Heart left ventricle (tissue), 16 donors: ENCODE measurements at regions of chr3 and their contacts with region 1.

Region 1: GRCh38 chr3:48151058-48151806 is 37.0 kb downstream of the CDC25A start:
- DNase-seq: peak; percentile 80 to 86 (median 82)
- ATAC-seq: peak; percentile 94 to 98 (median 96)
- H3K4me3 ChIP-seq: peak overlapping the region in 2 of 12 donors; percentile 8
- H3K27ac ChIP-seq: peak overlapping the region in 10 of 12 donors; percentile 1 to 74 (median 59)
- H3K4me1 ChIP-seq: peaks cover 0 to 22% (median 17%) of the 10 kb centered on the region in 12 donors
- H3K27me3 ChIP-seq: no peaks in the 10 kb centered on the region
- CTCF ChIP-seq: peak; percentile 53 to 93 (median 84)
- POLR2A ChIP-seq: no peak

Region 2: GRCh38 chr3:47824541-47825473 is 326.4 kb before region 1 on chr3:
- intact Hi-C with region 1: loop called in 3 of 10 experiments (anchors 1 to 5 kb)
- DNase-seq: peak; percentile 75 to 89 (median 80)
- ATAC-seq: peak; percentile 83 to 99 (median 98)
- H3K4me3 ChIP-seq: peak overlapping the region; percentile 49 to 99 (median 84)
- H3K27ac ChIP-seq: peak overlapping the region; percentile 1 to 90 (median 82)
- H3K4me1 ChIP-seq: peaks cover 0 to 25% (median 20%) of the 10 kb centered on the region in 12 donors
- H3K27me3 ChIP-seq: no peaks in the 10 kb centered on the region
- CTCF ChIP-seq: peak; percentile 74 to 94 (median 87)
- POLR2A ChIP-seq: peak in 1 of 2 donors; percentile 37

Region 3: GRCh38 chr3:47836986-47837385 is 314.2 kb before region 1 on chr3:
- intact Hi-C with region 1: loop called (anchors 1 to 5 kb)
- DNase-seq: no peak
- ATAC-seq: no peak
- H3K4me3 ChIP-seq: no peak overlapping the region
- H3K27ac ChIP-seq: no peak overlapping the region
- H3K4me1 ChIP-seq: peaks cover 0 to 8% (median 0%) of the 10 kb centered on the region in 12 donors
- H3K27me3 ChIP-seq: no peaks in the 10 kb centered on the region
- CTCF ChIP-seq: no peak
- POLR2A ChIP-seq: no peak

Region 4: GRCh38 chr3:47877290-47877689 is 273.9 kb before region 1 on chr3:
- intact Hi-C with region 1: loop called in 1 of 10 experiments (anchors 5 kb)
- DNase-seq: no peak
- ATAC-seq: peak in 3 of 4 donors; percentile 30 to 55 (median 49)
- H3K4me3 ChIP-seq: no peak overlapping the region
- H3K27ac ChIP-seq: peak overlapping the region in 9 of 12 donors; percentile 0 to 49 (median 22)
- H3K4me1 ChIP-seq: peaks cover 0 to 53% (median 31%) of the 10 kb centered on the region in 12 donors
- H3K27me3 ChIP-seq: no peaks in the 10 kb centered on the region
- CTCF ChIP-seq: no peak
- POLR2A ChIP-seq: no peak

Region 5: DNA sequence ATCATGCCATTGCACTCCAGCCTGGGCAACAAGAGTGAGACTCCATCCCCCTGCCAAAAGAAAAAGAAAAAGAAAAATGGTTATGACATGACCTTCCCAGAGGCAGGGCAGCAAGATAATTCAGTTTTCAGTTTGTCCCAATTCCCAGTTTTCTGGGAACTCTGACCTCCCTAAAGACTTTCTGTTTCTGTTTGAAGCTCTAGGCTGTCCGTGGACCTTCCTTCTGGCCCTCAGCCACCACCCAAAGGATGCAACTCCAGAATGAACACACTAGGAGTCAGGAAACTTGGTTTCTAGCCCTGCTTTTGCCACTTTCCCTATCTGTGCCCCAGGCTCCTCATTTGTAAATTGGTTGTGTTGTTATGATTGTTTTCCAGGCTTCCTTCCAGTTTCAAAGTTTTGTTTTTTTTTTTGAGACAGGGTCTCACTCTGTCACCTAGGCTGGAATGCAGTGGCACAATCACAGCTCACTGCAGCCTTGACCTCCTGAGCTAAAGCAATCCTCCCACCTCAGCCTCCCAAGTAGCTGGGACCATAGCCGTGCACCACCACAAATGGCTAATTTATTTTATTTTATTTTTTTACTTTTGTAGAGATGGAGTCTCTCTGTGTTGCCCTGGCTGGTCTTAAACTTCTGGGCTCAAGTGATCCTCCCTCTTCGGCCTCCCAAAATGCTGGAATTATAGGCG is 31.6 kb before region 1 on chr3:
- intact Hi-C with region 1: no loop called
- DNase-seq: peak; percentile 58 to 74 (median 70)
- ATAC-seq: peak; percentile 61 to 91 (median 78)
- H3K4me3 ChIP-seq: no peak overlapping the region
- H3K27ac ChIP-seq: peak overlapping the region; percentile 6 to 69 (median 52)
- H3K4me1 ChIP-seq: peaks cover 0 to 22% (median 6%) of the 10 kb centered on the region in 12 donors
- H3K27me3 ChIP-seq: no peaks in the 10 kb centered on the region
- CTCF ChIP-seq: peak in 2 of 12 donors; percentile 17 to 19
- POLR2A ChIP-seq: no peak

Region 6: GRCh38 chr3:48135552-48136495 is 15.4 kb before region 1 on chr3:
- intact Hi-C with region 1: no loop called
- DNase-seq: no peak
- ATAC-seq: no peak
- H3K4me3 ChIP-seq: no peak overlapping the region
- H3K27ac ChIP-seq: peak overlapping the region in 1 of 12 donors; percentile 16
- H3K4me1 ChIP-seq: peaks cover 0 to 26% (median 16%) of the 10 kb centered on the region in 12 donors
- H3K27me3 ChIP-seq: no peaks in the 10 kb centered on the region
- CTCF ChIP-seq: no peak
- POLR2A ChIP-seq: no peak